WTC11 (cell line): ENCODE measurements at regions of chr10 and their contacts with region 1.

Region 1: GRCh38 chr10:97572214-97572989 is at the start of gene ANKRD2:
- DNase-seq: peak; percentile 88
- ATAC-seq: peak; percentile 92
- H3K4me3 Mint-ChIP-seq: no peak within 1 kb of the TSS
- H3K27ac Mint-ChIP-seq: peak within 1 kb of the TSS; percentile 75
- H3K4me1 Mint-ChIP-seq: peaks cover 5% of the 10 kb centered on the region
- H3K27me3 Mint-ChIP-seq: no peaks in the 10 kb centered on the region
- CTCF ChIP-seq: no peak; the same call in 1 of the 2 replicates
- total RNA-seq, gene ANKRD2: not detected in 3 replicates

Region 2: DNA sequence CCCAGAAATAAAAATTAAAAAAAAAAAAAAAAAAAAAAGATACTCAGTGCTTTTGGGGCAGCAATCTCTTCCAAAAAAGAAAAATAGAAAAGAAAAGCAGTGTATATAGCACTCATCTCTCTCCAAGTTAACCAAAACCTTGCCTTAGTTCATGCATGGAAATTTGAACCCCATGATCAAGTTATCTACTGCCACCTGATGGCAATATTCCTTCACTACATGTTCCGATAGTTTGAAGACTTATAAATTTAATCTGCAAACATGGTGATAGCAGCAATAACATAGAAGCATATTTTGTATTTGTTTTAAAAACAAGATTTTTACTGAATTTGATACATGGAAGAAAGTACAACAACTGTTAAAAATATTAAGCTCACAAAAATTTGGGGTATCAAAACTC is 338.0 kb before region 1 on chr10:
- CTCF ChIA-PET with region 1: no interaction called
- POLR2A ChIA-PET with region 1: no interaction called
- DNase-seq: no peak
- ATAC-seq: no peak
- H3K4me3 Mint-ChIP-seq: no peak overlapping the region
- H3K27ac Mint-ChIP-seq: no peak overlapping the region
- H3K4me1 Mint-ChIP-seq: no peaks in the 10 kb centered on the region
- H3K27me3 Mint-ChIP-seq: no peaks in the 10 kb centered on the region
- CTCF ChIP-seq: peak; percentile 42; the same call in 1 of the 2 replicates

Region 3: DNA sequence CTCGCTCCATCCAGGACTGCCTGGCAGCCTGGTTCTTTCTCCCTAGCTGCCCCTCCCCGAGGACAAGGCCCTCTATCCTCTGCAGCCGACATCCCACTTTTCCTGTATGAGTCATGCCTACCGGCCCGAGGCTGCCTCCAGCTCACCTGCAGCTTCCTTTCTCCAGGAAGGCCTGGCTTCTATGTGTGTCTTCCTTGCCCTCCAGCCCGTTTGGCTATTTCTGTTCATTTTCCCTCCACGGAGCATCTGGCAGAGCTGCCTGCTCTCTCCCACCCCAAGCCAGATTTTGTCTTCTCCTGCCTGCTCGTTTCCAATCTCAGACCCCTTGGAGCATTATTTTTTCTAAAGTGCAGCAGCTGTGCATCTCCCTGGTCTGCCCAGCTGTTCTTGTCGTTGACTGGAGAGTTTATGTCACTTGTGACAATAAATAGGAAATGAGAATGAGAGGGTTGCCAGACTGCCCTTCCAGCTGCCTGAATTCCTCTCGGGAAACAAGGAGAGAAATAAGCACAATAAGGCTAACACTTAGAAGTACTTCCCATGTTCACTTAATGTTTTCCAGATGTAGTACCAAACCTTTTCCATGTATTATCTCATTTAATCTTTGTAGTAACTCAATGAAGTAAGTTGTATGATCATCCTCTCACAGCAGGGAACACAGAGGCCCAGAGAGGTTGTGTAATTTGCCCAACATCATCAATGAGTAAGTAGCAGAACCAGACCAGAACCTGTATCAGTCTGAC is 53.9 kb before region 1 on chr10:
- CTCF ChIA-PET with region 1: interaction called, 10 read pairs
- POLR2A ChIA-PET with region 1: no interaction called
- DNase-seq: no peak
- ATAC-seq: peak; percentile 56
- H3K4me3 Mint-ChIP-seq: no peak overlapping the region
- H3K27ac Mint-ChIP-seq: peak overlapping the region; percentile 55; the same call in 1 of the 2 replicates
- H3K4me1 Mint-ChIP-seq: peaks cover 43% of the 10 kb centered on the region
- H3K27me3 Mint-ChIP-seq: no peaks in the 10 kb centered on the region; the same call in 1 of the 2 replicates
- CTCF ChIP-seq: no peak

Region 4: GRCh38 chr10:97534746-97535367 is 37.5 kb before region 1 on chr10:
- CTCF ChIA-PET with region 1: interaction called, 39 read pairs
- POLR2A ChIA-PET with region 1: no interaction called
- DNase-seq: peak; percentile 68
- ATAC-seq: peak; percentile 82
- H3K4me3 Mint-ChIP-seq: no peak overlapping the region
- H3K27ac Mint-ChIP-seq: peak overlapping the region; percentile 86
- H3K4me1 Mint-ChIP-seq: peaks cover 15% of the 10 kb centered on the region
- H3K27me3 Mint-ChIP-seq: no peaks in the 10 kb centered on the region
- CTCF ChIP-seq: peak; percentile 69

Region 5: DNA sequence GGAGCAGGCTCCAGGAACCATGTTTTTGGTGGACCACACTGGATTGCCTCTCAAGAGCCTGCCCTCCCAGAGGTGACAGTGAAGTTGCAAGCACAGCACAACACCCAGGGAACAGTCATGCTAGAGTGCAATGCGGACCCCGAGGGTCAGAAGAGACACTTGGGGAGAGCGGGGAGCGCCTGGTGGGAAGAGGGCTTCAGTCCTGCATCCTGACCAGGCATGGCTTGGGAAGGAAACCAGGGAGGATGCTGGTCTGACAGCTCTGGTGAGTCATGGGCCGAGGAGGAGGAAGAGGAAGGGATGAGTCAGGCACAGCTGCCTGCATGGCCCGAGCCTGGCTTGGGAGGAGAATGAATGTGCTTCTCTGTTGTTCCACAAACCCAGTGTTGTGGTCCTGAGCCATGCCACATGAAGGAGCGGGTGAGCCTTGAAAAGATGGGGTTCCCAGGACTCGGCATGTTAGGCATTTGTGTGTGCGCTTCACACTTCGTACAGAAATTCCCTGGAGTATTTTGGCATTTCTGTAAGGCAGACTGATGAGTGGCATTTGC is 29.3 kb before region 1 on chr10:
- CTCF ChIA-PET with region 1: interaction called, 14 read pairs
- POLR2A ChIA-PET with region 1: no interaction called
- DNase-seq: no peak
- ATAC-seq: no peak
- H3K4me3 Mint-ChIP-seq: no peak overlapping the region
- H3K27ac Mint-ChIP-seq: peak overlapping the region; percentile 5
- H3K4me1 Mint-ChIP-seq: peaks cover 32% of the 10 kb centered on the region
- H3K27me3 Mint-ChIP-seq: no peaks in the 10 kb centered on the region
- CTCF ChIP-seq: no peak

Region 6: GRCh38 chr10:97584060-97584797 is 11.8 kb after region 1 on chr10 and contains the start of gene HOGA1:
- CTCF ChIA-PET with region 1: interaction called, 32 read pairs
- POLR2A ChIA-PET with region 1: interaction called, 3 read pairs
- DNase-seq: peak; percentile 52
- ATAC-seq: peak; percentile 98
- H3K4me3 Mint-ChIP-seq: no peak within 1 kb of the TSS
- H3K27ac Mint-ChIP-seq: no peak within 1 kb of the TSS
- H3K4me1 Mint-ChIP-seq: 0 out of 2 replicates have a peak, but pooled peaks cover 7% of the 10 kb centered on the region
- H3K27me3 Mint-ChIP-seq: no peaks in the 10 kb centered on the region
- CTCF ChIP-seq: no peak
- total RNA-seq, gene HOGA1: 0.15 to 0.62 TPM (median 0.55 TPM) in 3 replicates

Region 7: GRCh38 chr10:97590082-97590747 is 17.8 kb after region 1 on chr10:
- CTCF ChIA-PET with region 1: interaction called, 15 read pairs
- POLR2A ChIA-PET with region 1: no interaction called
- DNase-seq: no peak
- ATAC-seq: no peak
- H3K4me3 Mint-ChIP-seq: no peak overlapping the region
- H3K27ac Mint-ChIP-seq: no peak overlapping the region
- H3K4me1 Mint-ChIP-seq: no peaks in the 10 kb centered on the region
- H3K27me3 Mint-ChIP-seq: no peaks in the 10 kb centered on the region
- CTCF ChIP-seq: no peak

Region 8: GRCh38 chr10:97612386-97612785 is 40.0 kb after region 1 on chr10:
- CTCF ChIA-PET with region 1: interaction called, 55 read pairs
- POLR2A ChIA-PET with region 1: interaction called, 3 read pairs
- DNase-seq: no peak
- ATAC-seq: peak; percentile 86
- H3K4me3 Mint-ChIP-seq: no peak overlapping the region
- H3K27ac Mint-ChIP-seq: no peak overlapping the region; the same call in 1 of the 2 replicates
- H3K4me1 Mint-ChIP-seq: peaks cover 14% of the 10 kb centered on the region
- H3K27me3 Mint-ChIP-seq: no peaks in the 10 kb centered on the region
- CTCF ChIP-seq: no peak